Activated B cell treated with CpG ODN at 0.5 μM for 24 hours (primary cell): ENCODE measurements at regions of chr9 and their contacts with region 1.

Region 1: GRCh38 chr9:111983484-111983908 is 86.9 kb downstream of the UGCG start:
- DNase-seq: peak; percentile 44
- ATAC-seq: peak; percentile 86
- H3K4me3 Mint-ChIP-seq: peak overlapping the region; percentile 55
- H3K27ac Mint-ChIP-seq: peak overlapping the region; percentile 97
- H3K4me1 Mint-ChIP-seq: peaks cover 66% of the 10 kb centered on the region
- H3K27me3 Mint-ChIP-seq: no peaks in the 10 kb centered on the region
- CTCF ChIP-seq: no peak

Region 2: DNA sequence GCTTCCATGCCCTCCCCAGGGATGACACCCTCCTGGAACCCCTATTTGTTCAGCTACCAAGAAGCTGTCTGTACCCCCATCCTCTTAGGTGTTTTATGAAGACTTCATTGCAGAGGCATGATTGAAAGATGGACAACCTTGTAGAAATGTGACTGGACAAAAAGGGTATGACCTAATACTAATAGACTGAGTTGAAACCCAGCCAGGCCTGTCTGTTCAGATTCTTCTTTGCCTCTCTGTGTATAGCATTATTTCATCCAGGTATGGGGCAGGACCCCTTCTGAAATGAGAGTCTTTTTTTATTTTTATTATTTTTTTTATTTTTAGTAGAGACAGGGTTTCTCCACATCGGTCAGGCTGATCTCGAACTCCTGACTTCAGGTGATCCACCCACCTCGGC is 492.1 kb before region 1 on chr9:
- CTCF ChIA-PET with region 1: no interaction called
- POLR2A ChIA-PET with region 1: no interaction called
- intact Hi-C with region 1: no loop called
- DNase-seq: no peak
- ATAC-seq: no peak
- H3K4me3 Mint-ChIP-seq: no peak overlapping the region
- H3K27ac Mint-ChIP-seq: no peak overlapping the region
- H3K4me1 Mint-ChIP-seq: no peaks in the 10 kb centered on the region
- H3K27me3 Mint-ChIP-seq: peaks cover 8% of the 10 kb centered on the region
- CTCF ChIP-seq: no peak

Region 3: GRCh38 chr9:111815277-111816070 is 168.0 kb before region 1 on chr9:
- CTCF ChIA-PET with region 1: no interaction called
- POLR2A ChIA-PET with region 1: no interaction called
- intact Hi-C with region 1: no loop called
- DNase-seq: no peak
- ATAC-seq: no peak
- H3K4me3 Mint-ChIP-seq: no peak overlapping the region
- H3K27ac Mint-ChIP-seq: no peak overlapping the region
- H3K4me1 Mint-ChIP-seq: peaks cover 5% of the 10 kb centered on the region
- H3K27me3 Mint-ChIP-seq: no peaks in the 10 kb centered on the region
- CTCF ChIP-seq: no peak

Region 4: DNA sequence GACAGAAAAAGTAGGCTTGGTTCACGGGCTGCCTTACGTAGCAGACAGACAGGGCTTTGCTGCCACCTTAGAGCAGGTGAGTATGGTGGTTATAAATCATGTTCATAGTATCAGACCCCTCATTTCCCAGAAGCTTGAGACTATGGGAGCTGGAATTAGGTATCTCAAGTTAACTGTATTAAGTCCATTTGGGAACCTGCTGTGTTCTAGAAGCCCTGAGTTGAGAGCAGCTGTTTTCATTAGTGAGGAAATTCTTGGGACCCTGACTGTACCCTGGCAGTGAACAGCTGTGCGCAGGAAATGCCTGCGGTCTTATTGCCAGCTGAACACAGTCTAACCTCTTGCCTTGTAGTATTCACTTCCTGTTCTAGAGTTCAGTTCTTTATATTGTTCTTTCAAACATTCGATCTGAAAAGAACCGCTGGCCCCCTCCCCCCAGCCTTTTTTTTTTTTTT is 57.0 kb before region 1 on chr9:
- CTCF ChIA-PET with region 1: no interaction called
- POLR2A ChIA-PET with region 1: interaction called, 35 read pairs
- intact Hi-C with region 1: loop called (anchors 2 kb)
- DNase-seq: peak; percentile 34
- ATAC-seq: peak; percentile 97
- H3K4me3 Mint-ChIP-seq: peak overlapping the region; percentile 56
- H3K27ac Mint-ChIP-seq: peak overlapping the region; percentile 83
- H3K4me1 Mint-ChIP-seq: peaks cover 48% of the 10 kb centered on the region
- H3K27me3 Mint-ChIP-seq: no peaks in the 10 kb centered on the region
- CTCF ChIP-seq: no peak

Region 5: GRCh38 chr9:111945216-111945615 is 38.3 kb before region 1 on chr9:
- CTCF ChIA-PET with region 1: no interaction called
- POLR2A ChIA-PET with region 1: interaction called, 3 read pairs
- intact Hi-C with region 1: loop called (anchors 2 kb)
- DNase-seq: no peak
- ATAC-seq: peak; percentile 89
- H3K4me3 Mint-ChIP-seq: peak overlapping the region; percentile 71
- H3K27ac Mint-ChIP-seq: peak overlapping the region; percentile 75
- H3K4me1 Mint-ChIP-seq: peaks cover 53% of the 10 kb centered on the region
- H3K27me3 Mint-ChIP-seq: no peaks in the 10 kb centered on the region
- CTCF ChIP-seq: no peak

Region 6: GRCh38 chr9:112002131-112002846 is 18.8 kb after region 1 on chr9:
- CTCF ChIA-PET with region 1: interaction called, 3 read pairs
- POLR2A ChIA-PET with region 1: interaction called, 21 read pairs
- intact Hi-C with region 1: loop called (anchors 1 kb)
- DNase-seq: no peak
- ATAC-seq: no peak
- H3K4me3 Mint-ChIP-seq: peak overlapping the region; percentile 6
- H3K27ac Mint-ChIP-seq: peak overlapping the region; percentile 54
- H3K4me1 Mint-ChIP-seq: peaks cover 49% of the 10 kb centered on the region
- H3K27me3 Mint-ChIP-seq: no peaks in the 10 kb centered on the region
- CTCF ChIP-seq: no peak

Region 7: GRCh38 chr9:112020680-112021596 is 37.4 kb after region 1 on chr9:
- CTCF ChIA-PET with region 1: no interaction called
- POLR2A ChIA-PET with region 1: interaction called, 82 read pairs
- intact Hi-C with region 1: no loop called
- DNase-seq: no peak
- ATAC-seq: peak; percentile 51
- H3K4me3 Mint-ChIP-seq: peak overlapping the region; percentile 39
- H3K27ac Mint-ChIP-seq: peak overlapping the region; percentile 67
- H3K4me1 Mint-ChIP-seq: peaks cover 59% of the 10 kb centered on the region
- H3K27me3 Mint-ChIP-seq: no peaks in the 10 kb centered on the region
- CTCF ChIP-seq: no peak

Region 8: DNA sequence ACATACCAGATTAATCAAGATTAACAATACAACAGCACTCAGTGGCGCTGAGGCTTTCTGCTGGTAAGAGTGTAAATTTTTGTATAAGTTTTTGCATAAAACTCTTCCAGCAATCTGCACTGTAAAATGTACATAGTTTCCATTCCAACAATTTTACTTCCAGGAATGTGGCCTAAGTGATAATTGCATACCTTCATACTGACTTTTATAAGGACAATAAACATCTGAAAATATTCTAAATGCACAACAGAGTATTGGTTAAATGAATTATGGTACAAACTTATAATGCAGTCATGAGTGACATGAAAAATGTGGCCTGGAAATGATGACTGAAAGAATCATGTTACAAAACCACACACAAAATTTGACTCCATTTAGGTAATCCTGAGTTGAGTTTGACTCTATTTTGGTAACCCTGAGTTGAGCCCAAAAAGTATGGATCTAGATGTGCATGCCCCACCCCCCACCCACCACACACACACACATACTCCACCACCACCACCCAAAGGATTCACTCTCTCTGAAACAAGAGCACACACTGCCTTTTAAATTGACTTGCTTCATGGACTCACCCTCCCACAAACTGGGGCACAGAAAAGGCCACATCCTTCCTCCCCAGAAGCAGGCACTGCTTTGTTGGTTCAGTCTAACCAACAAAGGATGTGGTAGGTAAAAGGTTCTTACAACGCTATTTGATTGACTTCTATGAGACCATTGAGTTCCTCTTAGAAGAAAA is 54.0 kb after region 1 on chr9:
- CTCF ChIA-PET with region 1: interaction called, 6 read pairs
- POLR2A ChIA-PET with region 1: interaction called, 120 read pairs
- intact Hi-C with region 1: loop called (anchors 1 kb)
- DNase-seq: no peak
- ATAC-seq: peak; percentile 65
- H3K4me3 Mint-ChIP-seq: peak overlapping the region; percentile 68
- H3K27ac Mint-ChIP-seq: peak overlapping the region; percentile 96
- H3K4me1 Mint-ChIP-seq: peaks cover 88% of the 10 kb centered on the region
- H3K27me3 Mint-ChIP-seq: no peaks in the 10 kb centered on the region
- CTCF ChIP-seq: no peak